ENCODE measurements at regions of chr15 and their contacts with region 1.

Region 1: GRCh38 chr15:52139599-52140491 is 27.3 kb upstream of the BCL2L10 start:
- DNase-seq: peak; percentile 64 to 75 (median 74)
- H3K4me3 ChIP-seq: no peak overlapping the region
- H3K27ac ChIP-seq: no peak overlapping the region
- H3K4me1 ChIP-seq: peaks cover 11 to 54% (median 49%) of the 10 kb centered on the region in 4 experiments
- H3K27me3 ChIP-seq: no peaks in the 10 kb centered on the region

Region 2: GRCh38 chr15:52078876-52079700 is 60.8 kb before region 1 on chr15:
- CTCF ChIA-PET with region 1: interaction called, 50 read pairs
- POLR2A ChIA-PET with region 1: no interaction called
- DNase-seq: peak; percentile 74 to 78 (median 77)
- H3K4me3 ChIP-seq: no peak overlapping the region
- H3K27ac ChIP-seq: no peak overlapping the region
- H3K4me1 ChIP-seq: peaks cover 6 to 52% (median 40%) of the 10 kb centered on the region in 4 experiments
- H3K27me3 ChIP-seq: no peaks in the 10 kb centered on the region

Region 3: GRCh38 chr15:52112203-52112750 is 27.6 kb before region 1 on chr15:
- CTCF ChIA-PET with region 1: interaction called, 25 read pairs
- POLR2A ChIA-PET with region 1: no interaction called
- DNase-seq: peak in 2 of 3 donors; percentile 53 to 67
- H3K4me3 ChIP-seq: peak overlapping the region in 6 of 7 experiments; percentile 22 to 76 (median 54)
- H3K27ac ChIP-seq: no peak overlapping the region
- H3K4me1 ChIP-seq: peaks cover 5 to 25% (median 12%) of the 10 kb centered on the region in 4 experiments
- H3K27me3 ChIP-seq: peaks cover 0 to 8% (median 0%) of the 10 kb centered on the region in 5 experiments

Region 4: GRCh38 chr15:52154896-52155865 is 15.3 kb after region 1 on chr15:
- CTCF ChIA-PET with region 1: interaction called, 10 read pairs
- POLR2A ChIA-PET with region 1: no interaction called
- DNase-seq: peak in 2 of 3 donors; percentile 28 to 31
- H3K4me3 ChIP-seq: peak overlapping the region in 1 of 7 experiments; percentile 4
- H3K27ac ChIP-seq: no peak overlapping the region
- H3K4me1 ChIP-seq: peaks cover 0 to 18% (median 14%) of the 10 kb centered on the region in 4 experiments
- H3K27me3 ChIP-seq: no peaks in the 10 kb centered on the region